Activated CD4-positive, alpha-beta T cell treated with anti-CD3 and anti-CD28 coated beads, Interleukin-2, amount 10 ng/mL, durations not matched to agents 24 days and 14 days (primary cell): ENCODE measurements at regions of chr10 and their contacts with region 1.

Region 1: GRCh38 chr10:47024399-47025252 is 113.4 kb downstream of the PTPN20 start:
- DNase-seq: peak; percentile 89
- H3K4me3 Mint-ChIP-seq: no peak overlapping the region
- H3K27ac Mint-ChIP-seq: no peak overlapping the region
- H3K4me1 Mint-ChIP-seq: no peaks in the 10 kb centered on the region
- H3K27me3 Mint-ChIP-seq: no peaks in the 10 kb centered on the region

Region 2: DNA sequence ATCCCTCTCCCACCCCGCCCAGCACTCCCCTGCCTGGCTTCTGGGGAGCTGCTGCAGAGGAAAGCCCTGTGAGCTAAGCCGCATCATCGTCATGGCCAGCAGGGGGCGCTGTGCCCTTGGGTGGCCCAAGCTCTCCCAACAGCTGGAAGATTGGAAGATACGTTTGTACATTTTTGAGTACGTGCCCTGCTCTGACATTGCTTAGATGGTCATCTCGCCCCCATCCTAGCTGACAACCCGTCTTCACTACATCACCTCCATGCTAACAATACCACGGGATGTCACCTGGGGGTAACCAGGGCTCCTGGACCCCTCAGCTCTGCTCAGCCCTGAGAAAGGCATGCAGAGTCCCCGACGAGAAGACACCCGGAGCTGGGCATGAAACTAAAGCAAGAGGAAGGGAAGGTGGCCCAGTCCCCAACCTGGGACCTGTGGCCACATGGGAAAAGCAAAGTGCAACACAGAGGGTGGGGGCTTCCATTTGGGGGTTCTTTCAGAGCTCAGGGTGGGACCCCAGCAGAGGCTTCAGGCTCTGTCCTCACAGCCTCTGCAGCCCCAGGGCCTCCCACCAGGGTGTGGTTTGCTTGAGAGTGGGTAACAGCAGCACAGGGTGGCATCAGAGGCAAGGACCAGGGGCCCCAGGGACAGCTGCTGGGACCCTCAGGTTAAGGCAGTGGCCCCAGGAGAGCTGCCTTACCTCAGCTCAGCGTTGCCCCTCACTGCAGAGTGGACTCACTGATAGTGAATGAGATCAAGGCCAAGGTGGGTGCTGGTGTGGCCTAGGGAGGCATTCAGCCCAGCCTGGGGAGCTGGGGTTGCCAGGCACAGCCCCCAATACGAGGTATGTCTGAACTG is 23.3 kb after region 1 on chr10:
- intact Hi-C with region 1: loop called (anchors 2 kb)
- DNase-seq: peak; percentile 92
- H3K4me3 Mint-ChIP-seq: no peak overlapping the region
- H3K27ac Mint-ChIP-seq: peak overlapping the region; percentile 18
- H3K4me1 Mint-ChIP-seq: peaks cover 6% of the 10 kb centered on the region
- H3K27me3 Mint-ChIP-seq: no peaks in the 10 kb centered on the region

Region 3: DNA sequence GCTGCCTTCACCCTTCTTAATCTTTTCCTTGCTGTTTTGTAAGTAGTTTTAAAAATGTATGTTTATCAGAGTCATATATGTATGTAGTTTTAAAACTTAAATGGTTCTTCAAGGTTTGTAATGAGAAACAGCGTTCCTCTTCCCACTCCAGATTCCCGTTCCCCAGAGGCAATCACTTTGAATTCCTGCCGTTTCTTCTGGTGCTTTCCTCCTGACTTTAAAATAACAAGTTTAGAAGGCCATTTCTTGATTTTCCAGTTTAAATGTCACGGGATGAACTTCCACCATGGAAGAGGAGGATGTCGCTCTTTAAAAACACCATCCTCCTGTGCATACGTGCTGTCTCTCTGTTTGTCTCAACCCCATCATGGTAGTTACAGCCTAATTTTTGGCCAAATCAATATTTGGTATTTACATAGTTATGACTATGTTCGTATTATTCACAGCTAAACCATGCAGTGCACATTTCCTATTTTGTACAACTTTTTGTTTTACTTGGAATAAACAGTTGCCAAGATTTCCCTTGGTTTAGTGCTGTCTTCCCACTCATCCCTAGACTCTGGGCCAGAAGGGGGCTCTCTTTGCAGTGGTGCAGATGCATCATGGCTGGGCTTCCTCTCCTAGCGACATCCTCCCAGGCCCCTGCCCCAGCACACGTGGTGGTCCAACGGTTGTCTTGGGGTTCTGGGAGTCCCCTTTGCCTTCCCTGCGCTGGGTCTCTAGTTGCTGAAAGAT is 38.0 kb after region 1 on chr10:
- intact Hi-C with region 1: no loop called
- DNase-seq: no peak
- H3K4me3 Mint-ChIP-seq: no peak overlapping the region
- H3K27ac Mint-ChIP-seq: no peak overlapping the region
- H3K4me1 Mint-ChIP-seq: no peaks in the 10 kb centered on the region
- H3K27me3 Mint-ChIP-seq: peaks cover 2% of the 10 kb centered on the region

Region 4: DNA sequence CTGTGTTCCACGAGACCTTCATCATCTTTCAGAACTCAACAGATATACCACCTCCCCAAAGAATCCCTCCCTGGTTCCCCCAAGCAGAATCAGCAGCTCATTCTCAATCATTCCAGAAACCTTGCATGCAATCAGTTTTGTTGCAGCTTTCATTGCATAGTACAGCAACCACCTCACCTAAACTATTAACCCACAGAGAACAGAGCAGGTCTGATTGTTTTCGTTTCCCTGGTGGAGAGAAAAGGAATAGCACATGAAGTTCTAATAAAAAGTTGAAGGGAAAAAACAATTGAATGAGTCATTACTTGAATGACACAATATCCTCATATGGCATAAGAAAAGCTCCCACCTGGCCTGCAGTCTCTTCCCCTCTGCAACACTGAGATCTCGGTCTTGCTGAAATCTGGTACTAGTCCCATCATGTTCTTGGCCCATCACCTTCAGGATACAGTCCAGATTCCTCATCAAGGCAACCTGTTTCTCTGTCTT is 128.3 kb after region 1 on chr10:
- intact Hi-C with region 1: no loop called
- DNase-seq: no peak
- H3K4me3 Mint-ChIP-seq: no peak overlapping the region
- H3K27ac Mint-ChIP-seq: no peak overlapping the region
- H3K4me1 Mint-ChIP-seq: peaks cover 2% of the 10 kb centered on the region
- H3K27me3 Mint-ChIP-seq: peaks cover 8% of the 10 kb centered on the region

Region 5: DNA sequence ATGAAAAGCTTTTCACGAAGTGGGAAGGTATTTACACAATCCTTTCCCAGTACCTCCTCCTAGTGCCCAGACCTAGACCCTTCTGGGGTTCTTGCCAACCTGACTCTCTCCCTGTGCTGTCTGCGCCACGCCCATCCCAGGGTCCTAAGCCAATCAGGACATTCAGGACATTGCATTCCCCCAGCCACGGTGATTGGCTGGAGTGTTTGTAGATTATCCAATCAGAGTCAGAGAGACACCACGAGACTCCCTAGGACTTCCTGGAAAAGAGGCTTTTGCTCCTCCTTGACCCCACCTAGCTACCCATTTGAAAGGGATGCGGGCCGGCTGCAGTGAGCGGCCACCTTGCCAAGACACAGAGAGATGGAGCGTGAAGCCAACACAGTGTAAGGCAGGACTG is 294.1 kb after region 1 on chr10:
- intact Hi-C with region 1: no loop called
- DNase-seq: no peak
- H3K4me3 Mint-ChIP-seq: no peak overlapping the region
- H3K27ac Mint-ChIP-seq: no peak overlapping the region
- H3K4me1 Mint-ChIP-seq: no peaks in the 10 kb centered on the region
- H3K27me3 Mint-ChIP-seq: no peaks in the 10 kb centered on the region

Region 6: DNA sequence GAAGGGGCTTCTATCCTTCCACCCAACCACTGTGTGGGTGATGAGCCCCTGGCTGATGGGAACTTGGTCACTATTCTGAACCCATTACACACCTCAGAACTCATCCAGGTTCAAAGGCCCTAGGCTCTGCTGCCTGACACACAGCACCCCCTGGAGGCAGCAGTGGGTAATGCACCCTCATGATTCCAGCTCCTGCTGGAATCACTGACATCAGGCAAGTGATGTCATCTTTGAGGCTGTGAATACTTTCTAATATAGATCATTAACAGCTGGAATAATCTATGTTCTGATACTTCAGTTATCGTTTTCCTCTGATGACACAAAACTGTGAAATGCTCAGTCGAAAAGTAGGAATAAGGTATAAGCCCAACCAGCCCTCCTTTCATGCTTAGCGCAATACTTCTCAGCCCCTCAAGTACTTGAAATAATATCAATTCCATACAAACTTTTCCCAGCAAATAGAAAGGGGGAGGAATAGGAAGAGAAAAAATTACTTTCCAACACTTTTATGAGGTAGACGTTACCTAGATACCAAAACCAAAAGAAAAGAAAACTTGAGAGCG is 316.1 kb after region 1 on chr10:
- intact Hi-C with region 1: loop called (anchors 1 kb)
- DNase-seq: peak; percentile 90
- H3K4me3 Mint-ChIP-seq: no peak overlapping the region
- H3K27ac Mint-ChIP-seq: no peak overlapping the region
- H3K4me1 Mint-ChIP-seq: no peaks in the 10 kb centered on the region
- H3K27me3 Mint-ChIP-seq: peaks cover 10% of the 10 kb centered on the region